Mammary epithelial cell (primary cell): ENCODE measurements at regions of chr13 and their contacts with region 1.

Region 1: DNA sequence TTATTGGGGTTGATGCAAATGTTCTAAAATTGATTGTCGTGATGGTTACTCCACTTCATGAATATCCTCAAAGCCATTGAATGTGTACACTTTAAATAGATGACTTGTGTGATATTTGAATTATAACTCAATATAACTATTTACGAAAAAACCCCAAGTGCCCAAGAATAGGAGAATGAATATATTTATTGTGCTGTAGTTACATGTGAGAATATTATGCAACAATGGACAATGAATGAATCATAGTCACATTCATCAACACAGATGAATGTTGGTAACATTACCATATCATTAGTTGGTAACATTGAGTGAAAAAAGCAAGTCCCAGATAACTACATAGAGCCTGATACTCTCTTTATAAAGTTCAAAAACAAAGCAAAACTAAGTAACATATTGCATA is 127.8 kb upstream of the UBL3 start:
- DNase-seq: peak; percentile 52
- H3K4me3 ChIP-seq: no peak overlapping the region
- H3K27ac ChIP-seq: no peak overlapping the region
- H3K4me1 ChIP-seq: no peaks in the 10 kb centered on the region
- H3K27me3 ChIP-seq: peaks cover 1% of the 10 kb centered on the region
- CTCF ChIP-seq: no peak

Region 2: GRCh38 chr13:29763436-29764180 is 214.6 kb before region 1 on chr13:
- CTCF ChIA-PET with region 1: no interaction called
- dilution Hi-C with region 1: loop called (anchors 10 kb)
- in situ Hi-C with region 1: no loop called
- intact Hi-C with region 1: no loop called
- DNase-seq: no peak
- H3K4me3 ChIP-seq: no peak overlapping the region
- H3K27ac ChIP-seq: no peak overlapping the region
- H3K4me1 ChIP-seq: peaks cover 13% of the 10 kb centered on the region
- H3K27me3 ChIP-seq: no peaks in the 10 kb centered on the region
- CTCF ChIP-seq: no peak